ENCODE measurements at regions of chr11 and their contacts with region 1.

Region 1: GRCh38 chr11:102171101-102171500 is 60.9 kb downstream of the YAP1 start:
- DNase-seq: peak; percentile 50
- H3K4me3 ChIP-seq: no peak overlapping the region
- H3K27ac ChIP-seq: peak overlapping the region; percentile 29
- H3K4me1 ChIP-seq: peaks cover 22% of the 10 kb centered on the region
- H3K27me3 ChIP-seq: no peaks in the 10 kb centered on the region
- CTCF ChIP-seq: no peak
- POLR2A ChIP-seq: no peak

Region 2: GRCh38 chr11:101668236-101668635 is 502.9 kb before region 1 on chr11:
- CTCF ChIA-PET with region 1: no interaction called
- POLR2A ChIA-PET with region 1: no interaction called
- dilution Hi-C with region 1: no loop called
- intact Hi-C with region 1: no loop called
- DNase-seq: no peak
- H3K4me3 ChIP-seq: no peak overlapping the region
- H3K27ac ChIP-seq: no peak overlapping the region
- H3K4me1 ChIP-seq: no peaks in the 10 kb centered on the region
- H3K27me3 ChIP-seq: no peaks in the 10 kb centered on the region
- CTCF ChIP-seq: no peak
- POLR2A ChIP-seq: no peak

Region 3: DNA sequence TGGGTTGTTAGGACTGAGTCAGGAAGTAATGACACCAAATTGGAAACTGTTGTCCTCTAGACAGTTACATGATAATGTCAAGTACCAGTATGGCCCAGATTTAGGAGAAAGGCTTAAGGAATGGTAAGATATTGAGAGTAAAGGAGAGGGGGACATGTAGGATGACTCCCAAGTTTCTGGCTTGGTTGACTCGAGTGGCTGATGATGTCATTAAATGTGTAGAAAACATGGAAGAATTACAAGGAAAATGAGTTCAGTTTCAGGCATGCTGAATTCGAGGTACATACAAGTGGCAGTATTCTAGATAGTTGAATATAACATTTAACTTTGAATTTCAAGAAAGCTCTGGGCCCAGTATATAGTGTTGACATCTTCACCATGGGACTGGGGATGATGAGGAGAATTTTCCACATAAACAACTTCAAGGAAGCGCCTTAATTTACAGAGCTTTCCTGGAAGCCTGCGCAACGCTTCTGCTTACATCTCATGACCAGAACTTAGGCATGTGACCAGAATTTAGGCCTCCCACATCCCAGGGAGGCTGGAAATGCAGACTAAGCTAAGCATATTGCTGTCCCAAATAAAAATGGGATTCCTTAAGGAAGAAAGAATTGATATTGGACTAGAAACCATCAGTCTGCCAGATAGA is 120.0 kb before region 1 on chr11:
- CTCF ChIA-PET with region 1: no interaction called
- POLR2A ChIA-PET with region 1: no interaction called
- dilution Hi-C with region 1: no loop called
- intact Hi-C with region 1: no loop called
- DNase-seq: no peak
- H3K4me3 ChIP-seq: no peak overlapping the region
- H3K27ac ChIP-seq: no peak overlapping the region
- H3K4me1 ChIP-seq: peaks cover 15% of the 10 kb centered on the region
- H3K27me3 ChIP-seq: no peaks in the 10 kb centered on the region
- CTCF ChIP-seq: no peak
- POLR2A ChIP-seq: no peak

Region 4: DNA sequence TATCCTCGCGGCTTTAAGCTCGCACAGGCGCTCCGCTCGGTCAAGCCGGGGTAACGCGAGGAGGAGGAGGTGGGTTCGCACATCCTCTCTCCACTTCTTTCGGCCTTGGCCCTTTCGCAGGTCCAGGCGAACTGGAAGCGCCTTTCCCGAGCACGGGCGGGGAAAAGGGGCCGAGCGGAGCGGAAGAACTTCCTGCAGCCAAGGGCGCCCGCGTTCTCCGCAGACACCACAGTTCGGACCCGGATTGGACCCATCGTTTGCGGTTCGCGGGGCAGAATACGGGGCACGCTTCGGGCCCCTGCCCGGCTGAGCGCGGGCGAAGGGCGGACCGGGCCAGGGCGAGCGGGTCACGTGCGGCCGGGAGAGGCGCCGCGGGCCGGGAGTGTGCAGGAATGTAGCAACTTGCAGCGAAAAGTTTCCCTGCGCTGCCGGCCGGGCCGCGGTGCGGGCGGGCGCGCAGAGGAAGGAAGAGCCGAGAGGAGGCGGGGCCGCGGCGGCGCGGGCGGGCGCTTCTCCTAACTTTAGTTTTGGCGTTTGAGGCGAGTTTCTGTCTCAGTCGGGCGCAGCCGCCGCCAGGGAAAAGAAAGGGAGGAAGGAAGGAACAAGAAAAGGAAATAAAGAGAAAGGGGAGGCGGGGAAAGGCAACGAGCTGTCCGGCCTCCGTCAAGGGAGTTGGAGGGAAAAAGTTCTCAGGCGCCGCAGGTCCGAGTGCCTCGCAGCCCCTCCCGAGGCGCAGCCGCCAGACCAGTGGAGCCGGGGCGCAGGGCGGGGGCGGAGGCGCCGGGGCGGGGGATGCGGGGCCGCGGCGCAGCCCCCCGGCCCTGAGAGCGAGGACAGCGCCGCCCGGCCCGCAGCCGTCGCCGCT is 61.0 kb before region 1 on chr11 and contains the start of gene YAP1:
- CTCF ChIA-PET with region 1: interaction called, 3 read pairs
- POLR2A ChIA-PET with region 1: no interaction called
- dilution Hi-C with region 1: no loop called
- intact Hi-C with region 1: loop called (anchors 1 kb)
- DNase-seq: peak; percentile 89
- H3K4me3 ChIP-seq: peak within 1 kb of the TSS; percentile 85 to 99 (median 88)
- H3K27ac ChIP-seq: peak within 1 kb of the TSS; percentile 72
- H3K4me1 ChIP-seq: peaks cover 11% of the 10 kb centered on the region
- H3K27me3 ChIP-seq: peaks cover 2 to 18% of the 10 kb centered on the region in 2 experiments
- CTCF ChIP-seq: no peak
- POLR2A ChIP-seq: no peak
- total RNA-seq, gene YAP1: 36.5 and 48.9 TPM in 2 replicates

Region 5: DNA sequence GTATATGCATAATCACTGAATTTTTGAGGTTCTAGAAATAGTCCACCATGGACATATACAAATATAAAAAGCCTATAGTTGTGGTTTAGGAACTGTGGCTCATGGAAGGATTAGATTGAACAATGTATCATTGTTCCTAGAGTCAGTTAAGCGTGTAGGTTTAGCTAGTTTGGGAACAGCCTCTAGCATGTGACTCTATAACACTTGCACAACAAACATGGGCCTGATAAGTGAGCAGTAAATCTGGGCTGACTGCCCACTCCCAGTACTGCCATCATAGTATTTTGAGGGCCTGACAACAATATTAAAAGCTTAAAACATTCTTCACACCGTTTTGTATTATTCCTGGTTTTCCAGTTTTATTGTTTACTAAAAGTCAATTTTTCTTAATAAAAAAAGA is 13.9 kb before region 1 on chr11:
- CTCF ChIA-PET with region 1: interaction called, 10 read pairs
- POLR2A ChIA-PET with region 1: no interaction called
- dilution Hi-C with region 1: no loop called
- intact Hi-C with region 1: no loop called
- DNase-seq: peak; percentile 4
- H3K4me3 ChIP-seq: no peak overlapping the region
- H3K27ac ChIP-seq: no peak overlapping the region
- H3K4me1 ChIP-seq: no peaks in the 10 kb centered on the region
- H3K27me3 ChIP-seq: no peaks in the 10 kb centered on the region
- CTCF ChIP-seq: no peak
- POLR2A ChIP-seq: no peak

Region 6: DNA sequence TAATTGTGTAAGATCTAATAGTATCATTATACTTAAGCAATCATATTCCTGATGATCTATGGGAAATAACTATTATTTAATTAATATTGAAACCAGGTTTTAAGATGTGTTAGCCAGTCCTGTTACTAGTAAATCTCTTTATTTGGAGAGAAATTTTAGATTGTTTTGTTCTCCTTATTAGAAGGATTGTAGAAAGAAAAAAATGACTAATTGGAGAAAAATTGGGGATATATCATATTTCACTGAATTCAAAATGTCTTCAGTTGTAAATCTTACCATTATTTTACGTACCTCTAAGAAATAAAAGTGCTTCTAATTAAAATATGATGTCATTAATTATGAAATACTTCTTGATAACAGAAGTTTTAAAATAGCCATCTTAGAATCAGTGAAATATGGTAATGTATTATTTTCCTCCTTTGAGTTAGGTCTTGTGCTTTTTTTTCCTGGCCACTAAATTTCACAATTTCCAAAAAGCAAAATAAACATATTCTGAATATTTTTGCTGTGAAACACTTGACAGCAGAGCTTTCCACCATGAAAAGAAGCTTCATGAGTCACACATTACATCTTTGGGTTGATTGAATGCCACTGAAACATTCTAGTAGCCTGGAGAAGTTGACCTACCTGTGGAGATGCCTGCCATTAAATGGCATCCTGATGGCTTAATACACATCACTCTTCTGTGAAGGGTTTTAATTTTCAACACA is 152.6 kb after region 1 on chr11:
- CTCF ChIA-PET with region 1: no interaction called
- POLR2A ChIA-PET with region 1: no interaction called
- dilution Hi-C with region 1: no loop called
- intact Hi-C with region 1: no loop called
- DNase-seq: no peak
- H3K4me3 ChIP-seq: no peak overlapping the region
- H3K27ac ChIP-seq: no peak overlapping the region
- H3K4me1 ChIP-seq: no peaks in the 10 kb centered on the region
- H3K27me3 ChIP-seq: no peaks in the 10 kb centered on the region
- CTCF ChIP-seq: no peak
- POLR2A ChIP-seq: no peak

Region 7: DNA sequence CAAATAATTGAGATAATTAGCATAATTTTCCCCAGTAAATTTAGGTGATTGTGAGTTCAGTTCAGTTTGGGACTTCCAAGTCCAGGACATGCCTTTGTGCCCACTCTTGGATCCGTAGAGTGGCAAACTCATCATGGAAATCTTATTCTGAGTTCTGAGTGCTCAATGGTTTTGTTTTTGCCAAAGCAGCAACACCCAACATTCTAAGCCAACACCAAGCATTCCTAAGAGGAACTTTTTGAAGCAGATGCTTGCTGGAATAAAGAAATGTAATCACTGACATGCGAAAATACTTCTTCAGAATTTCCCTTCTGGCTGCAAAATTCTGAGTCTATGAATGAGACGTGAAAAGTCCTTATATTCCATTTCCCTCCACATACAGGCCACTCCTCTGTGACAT is 524.1 kb after region 1 on chr11:
- CTCF ChIA-PET with region 1: no interaction called
- POLR2A ChIA-PET with region 1: no interaction called
- dilution Hi-C with region 1: no loop called
- intact Hi-C with region 1: no loop called
- DNase-seq: no peak
- H3K4me3 ChIP-seq: no peak overlapping the region
- H3K27ac ChIP-seq: no peak overlapping the region
- H3K4me1 ChIP-seq: no peaks in the 10 kb centered on the region
- H3K27me3 ChIP-seq: peaks cover 6 to 19% of the 10 kb centered on the region in 2 experiments
- CTCF ChIP-seq: no peak
- POLR2A ChIP-seq: no peak

Measured in endothelial cell of umbilical vein (primary cell).